Heart right ventricle (tissue), 16 donors: ENCODE measurements at regions of chr2 and their contacts with region 1.

Region 1: GRCh38 chr2:40448468-40449079 is 3.3 kb downstream of the SLC8A1 start:
- DNase-seq: no peak
- ATAC-seq: peak in 1 of 8 donors; percentile 26
- H3K4me3 ChIP-seq: no peak overlapping the region
- H3K27ac ChIP-seq: peak overlapping the region in 4 of 10 donors; percentile 3 to 87 (median 29)
- H3K4me1 ChIP-seq: peaks cover 0 to 79% (median 54%) of the 10 kb centered on the region in 9 donors
- H3K27me3 ChIP-seq: no peaks in the 10 kb centered on the region
- CTCF ChIP-seq: peak in 8 of 9 donors; percentile 22 to 68 (median 57)

Region 2: GRCh38 chr2:40244675-40245074 is 203.9 kb before region 1 on chr2:
- intact Hi-C with region 1: loop called in 2 of 10 experiments (anchors 5 to 10 kb)
- DNase-seq: peak; percentile 27 to 65
- ATAC-seq: peak; percentile 42 to 81 (median 66)
- H3K4me3 ChIP-seq: no peak overlapping the region
- H3K27ac ChIP-seq: peak overlapping the region in 8 of 10 donors; percentile 17 to 82 (median 56)
- H3K4me1 ChIP-seq: peaks cover 13 to 91% (median 44%) of the 10 kb centered on the region in 9 donors
- H3K27me3 ChIP-seq: no peaks in the 10 kb centered on the region
- CTCF ChIP-seq: peak in 8 of 9 donors; percentile 19 to 74 (median 58)

Region 3: DNA sequence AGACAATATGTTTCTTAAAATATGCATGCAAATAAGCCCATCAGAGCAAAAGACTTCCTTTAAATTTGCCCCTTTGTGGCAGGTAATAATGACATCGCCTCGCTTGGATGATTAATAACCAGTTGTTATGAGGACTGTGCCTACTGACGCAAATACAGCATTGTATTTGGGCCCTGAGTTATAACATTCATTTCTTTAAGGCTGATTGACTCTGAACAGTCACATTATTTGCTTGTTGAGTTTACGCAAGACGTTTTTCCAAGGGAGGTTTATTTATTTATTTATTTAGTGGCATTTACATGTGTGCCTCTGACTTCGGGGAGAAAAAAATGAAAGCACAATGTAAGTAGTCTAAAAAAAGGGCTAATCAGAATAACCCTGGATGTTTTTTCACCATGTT is 84.9 kb before region 1 on chr2:
- intact Hi-C with region 1: loop called in 1 of 10 experiments (anchors 5 kb)
- DNase-seq: no peak
- ATAC-seq: peak in 3 of 8 donors; percentile 6 to 53 (median 46)
- H3K4me3 ChIP-seq: peak overlapping the region in 7 of 10 donors; percentile 1 to 40 (median 38)
- H3K27ac ChIP-seq: peak overlapping the region in 9 of 10 donors; percentile 7 to 76 (median 52)
- H3K4me1 ChIP-seq: peaks cover 3 to 77% (median 32%) of the 10 kb centered on the region in 9 donors
- H3K27me3 ChIP-seq: no peaks in the 10 kb centered on the region
- CTCF ChIP-seq: no peak

Region 4: DNA sequence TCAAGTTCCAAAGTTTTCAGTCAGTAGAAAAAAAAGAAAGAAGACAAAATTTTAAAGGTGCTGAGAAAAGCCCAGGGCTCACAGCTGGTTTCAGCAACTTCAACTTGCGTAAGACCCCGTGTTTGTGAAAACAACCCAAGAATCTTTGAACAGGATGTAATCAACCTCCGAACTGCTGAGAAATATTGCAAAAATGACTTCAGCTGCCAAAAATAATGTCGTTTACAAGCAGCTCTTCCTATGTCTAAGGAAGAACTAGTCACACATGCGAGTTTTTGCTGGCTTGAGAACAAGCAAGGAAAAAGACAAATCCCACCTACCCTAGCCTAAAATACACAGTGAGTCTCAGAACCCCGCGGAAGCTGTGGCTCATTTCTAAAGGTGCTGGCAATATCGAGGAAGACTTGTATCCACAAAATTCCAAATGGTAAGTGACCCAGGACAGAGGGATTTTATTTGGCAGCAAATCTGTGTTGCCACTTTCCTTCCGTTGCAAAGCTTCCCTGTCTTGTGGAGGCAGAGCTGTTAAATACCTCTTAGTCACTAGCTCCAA is 63.2 kb after region 1 on chr2:
- intact Hi-C with region 1: loop called in 2 of 10 experiments (anchors 5 to 10 kb)
- DNase-seq: peak in 1 of 2 donors; percentile 36
- ATAC-seq: peak; percentile 15 to 68 (median 50)
- H3K4me3 ChIP-seq: peak overlapping the region; percentile 22 to 65 (median 53)
- H3K27ac ChIP-seq: peak overlapping the region; percentile 61 to 96 (median 90)
- H3K4me1 ChIP-seq: peaks cover 0 to 40% (median 18%) of the 10 kb centered on the region in 9 donors
- H3K27me3 ChIP-seq: no peaks in the 10 kb centered on the region
- CTCF ChIP-seq: no peak

Region 5: GRCh38 chr2:40760071-40760666 is 311.6 kb after region 1 on chr2:
- intact Hi-C with region 1: loop called in 2 of 10 experiments (anchors 5 to 10 kb)
- DNase-seq: peak; percentile 8 to 38
- ATAC-seq: peak; percentile 51 to 89 (median 84)
- H3K4me3 ChIP-seq: no peak overlapping the region
- H3K27ac ChIP-seq: no peak overlapping the region
- H3K4me1 ChIP-seq: peaks cover 0 to 19% (median 6%) of the 10 kb centered on the region in 9 donors
- H3K27me3 ChIP-seq: no peaks in the 10 kb centered on the region
- CTCF ChIP-seq: peak; percentile 44 to 80 (median 67)